ENCODE measurements at regions of chr16 and their contacts with region 1.

Region 1: DNA sequence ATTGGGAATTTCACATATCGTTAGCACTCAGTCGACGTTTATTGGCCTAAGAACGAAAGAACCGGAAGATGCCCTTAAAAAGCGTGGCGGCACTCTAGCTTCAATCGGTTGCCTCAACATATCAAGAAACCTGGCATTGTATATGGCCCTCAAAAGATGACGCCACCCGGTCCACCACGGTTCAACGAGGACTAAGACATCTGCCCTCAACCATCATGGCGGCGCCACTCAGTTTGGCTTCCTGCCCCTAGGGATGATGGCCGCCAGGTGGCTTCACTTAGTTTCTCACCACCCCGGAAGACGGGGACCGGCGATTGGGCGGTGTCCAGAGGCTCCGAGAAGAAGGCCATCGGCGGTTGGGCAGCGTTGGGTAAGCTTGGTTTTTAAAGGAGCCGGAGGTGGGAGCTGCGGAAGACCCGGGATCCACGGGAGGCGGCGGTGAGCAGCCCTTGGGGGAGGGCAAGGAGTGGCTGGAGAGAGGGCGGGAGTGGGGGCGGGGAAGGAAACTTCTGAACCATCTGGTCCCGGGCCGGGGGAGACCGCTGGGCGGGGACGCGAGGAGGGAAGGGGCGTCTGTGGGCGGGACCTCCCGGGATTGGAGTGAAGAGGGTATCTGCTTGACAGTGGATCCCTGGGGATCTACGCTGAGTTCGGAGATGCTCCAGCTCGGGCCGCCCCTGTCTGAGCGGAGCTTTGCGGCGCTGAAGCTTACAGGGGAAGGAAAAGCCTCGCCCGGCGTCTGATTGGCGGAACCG is at the start of gene PRR14:
- DNase-seq: peak; percentile 97
- ATAC-seq: peak; percentile 89
- H3K4me3 ChIP-seq: peak within 1 kb of the TSS; percentile 91
- H3K27ac ChIP-seq: no peak within 1 kb of the TSS
- H3K4me1 ChIP-seq: 0 out of 2 replicates have a peak, but pooled peaks cover 4% of the 10 kb centered on the region
- H3K27me3 ChIP-seq: no peaks in the 10 kb centered on the region
- CTCF ChIP-seq: no peak
- total RNA-seq, gene PRR14: 9.6 and 14.5 TPM in 2 replicates

Region 2: DNA sequence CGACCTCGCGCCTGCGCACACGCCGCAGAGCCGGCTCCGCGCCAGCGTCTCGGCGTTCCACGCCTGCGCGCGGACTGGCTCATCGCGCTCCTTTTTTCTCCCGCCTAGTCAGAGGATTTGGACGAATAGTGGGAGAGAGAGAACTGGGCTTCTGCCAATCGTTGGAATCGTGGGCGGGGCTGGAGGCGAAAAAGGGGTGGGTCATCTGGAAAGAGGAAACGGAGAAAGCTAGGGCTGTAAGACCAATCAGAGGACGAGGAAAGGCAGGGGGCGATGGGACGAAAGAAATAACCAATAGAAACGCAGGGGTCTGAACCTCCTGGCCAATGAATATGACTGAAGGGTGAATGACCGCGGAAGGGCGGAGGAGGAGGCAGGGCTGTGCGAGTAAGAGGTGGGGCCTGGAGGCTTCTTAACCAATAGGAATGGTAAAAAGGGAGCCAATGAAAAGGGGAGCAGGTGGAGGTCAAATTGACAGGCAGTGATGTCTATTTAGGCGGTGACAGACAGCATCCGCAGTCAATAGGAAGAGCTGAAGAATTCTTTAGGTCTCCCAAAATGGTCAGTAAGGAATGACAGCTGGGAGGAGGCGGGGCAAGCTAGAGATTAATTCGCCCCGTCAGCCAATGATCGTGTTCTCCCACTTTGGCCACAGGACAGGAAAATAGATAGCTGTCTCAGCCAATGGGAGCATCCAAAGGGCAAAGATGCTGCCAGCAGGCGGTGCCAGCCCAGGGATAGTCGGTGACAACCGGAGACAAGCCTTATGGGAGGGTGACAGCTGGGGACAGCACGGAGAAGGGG is 279.9 kb before region 1 on chr16 and contains the start of gene TBC1D10B:
- CTCF ChIA-PET with region 1: no interaction called
- POLR2A ChIA-PET with region 1: no interaction called
- intact Hi-C with region 1: loop called (anchors 1 kb)
- DNase-seq: peak; percentile 99
- ATAC-seq: peak; percentile 78
- H3K4me3 ChIP-seq: peak within 1 kb of the TSS; percentile 94
- H3K27ac ChIP-seq: no peak within 1 kb of the TSS; the same call in 1 of the 2 replicates
- H3K4me1 ChIP-seq: peaks cover 21% of the 10 kb centered on the region
- H3K27me3 ChIP-seq: no peaks in the 10 kb centered on the region
- CTCF ChIP-seq: no peak; the same call in 1 of the 2 replicates
- total RNA-seq, gene TBC1D10B: 36.0 and 52.4 TPM in 2 replicates

Region 3: DNA sequence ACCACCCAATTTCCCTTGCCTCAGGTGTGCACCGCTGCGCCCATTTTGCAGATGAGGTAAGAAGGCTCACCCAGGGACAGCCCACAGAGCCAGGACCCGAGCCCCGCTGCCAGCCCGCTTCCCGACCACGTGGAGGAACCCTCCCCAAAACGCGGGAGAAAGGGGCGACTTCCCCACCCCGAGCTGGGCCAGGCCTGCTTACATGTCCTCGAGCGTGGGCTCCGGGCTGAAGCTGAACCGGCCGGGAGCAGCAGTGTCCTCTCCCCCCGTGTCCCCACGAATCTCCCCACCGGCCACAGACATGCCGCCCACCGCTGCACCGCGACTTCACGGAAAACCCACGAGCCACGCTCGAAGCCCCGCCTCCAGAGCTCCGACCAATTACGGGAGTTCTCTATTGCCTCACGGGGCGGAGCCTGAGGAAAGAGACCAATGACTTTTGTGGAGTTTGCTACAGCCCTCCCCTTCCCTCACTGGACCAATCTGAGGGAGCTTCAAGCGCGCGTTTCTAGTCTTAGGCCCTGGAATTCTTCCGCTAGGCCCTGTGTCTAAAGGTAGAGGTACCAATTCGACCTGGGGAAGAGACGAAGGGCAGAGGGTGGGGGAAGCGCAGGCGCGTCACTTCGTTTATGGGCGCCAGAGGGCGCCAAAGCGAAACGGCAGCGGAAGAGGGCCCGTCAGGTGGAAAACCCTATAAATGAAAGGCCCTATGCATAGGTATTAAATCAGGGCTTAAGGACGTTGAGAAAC is 220.7 kb before region 1 on chr16 and contains the start of gene DCTPP1:
- CTCF ChIA-PET with region 1: interaction called, 13 read pairs
- POLR2A ChIA-PET with region 1: no interaction called
- intact Hi-C with region 1: no loop called
- DNase-seq: peak; percentile 98
- ATAC-seq: peak; percentile 98
- H3K4me3 ChIP-seq: peak within 1 kb of the TSS; percentile 87
- H3K27ac ChIP-seq: peak within 1 kb of the TSS; percentile 60
- H3K4me1 ChIP-seq: peaks cover 12% of the 10 kb centered on the region; the same call in 1 of the 2 replicates
- H3K27me3 ChIP-seq: no peaks in the 10 kb centered on the region
- CTCF ChIP-seq: peak; percentile 83
- total RNA-seq, gene DCTPP1: 63.1 and 64.1 TPM in 2 replicates

Region 4: DNA sequence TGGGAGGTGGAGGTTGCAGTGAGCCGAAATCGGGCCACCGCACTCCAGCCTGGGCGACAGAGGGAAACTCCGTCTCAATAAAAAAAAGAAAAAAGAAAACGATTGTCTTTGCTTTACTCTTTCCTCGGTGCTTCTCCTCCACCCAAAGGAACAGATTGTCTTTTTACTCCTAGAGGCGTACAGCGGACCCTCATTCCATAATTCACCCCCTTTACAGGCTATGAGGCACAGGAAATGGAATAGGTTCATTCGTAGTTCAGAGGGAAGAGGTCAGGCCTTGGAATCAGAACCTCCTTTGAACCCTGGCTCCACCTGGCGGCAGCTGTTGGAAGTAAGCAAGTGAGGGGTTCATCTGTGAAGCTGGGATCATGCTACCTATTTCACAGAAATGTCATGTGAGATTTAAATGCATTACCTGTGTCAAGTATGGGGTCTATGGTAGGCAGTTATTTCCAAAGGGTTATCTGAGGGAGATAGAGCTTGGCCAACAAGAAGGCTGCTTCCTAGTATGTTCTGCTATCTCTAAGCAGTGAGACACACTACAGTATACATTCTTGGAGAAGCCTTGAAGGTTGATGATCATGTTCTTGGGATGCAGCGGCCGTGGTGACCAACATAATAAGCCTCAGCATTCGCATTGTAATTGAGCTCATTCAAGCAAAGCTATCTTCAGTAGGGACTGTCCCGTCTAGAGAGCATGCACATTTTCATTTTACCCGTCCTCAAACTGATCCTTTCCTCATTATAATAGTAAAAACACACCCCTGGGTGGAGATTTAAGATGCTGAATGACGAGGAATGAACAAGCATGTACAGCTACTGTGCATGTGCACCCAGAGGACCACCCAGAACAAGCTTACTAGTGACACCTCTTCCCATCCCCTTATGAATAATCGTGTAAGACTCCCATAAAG is 21.7 kb before region 1 on chr16:
- CTCF ChIA-PET with region 1: no interaction called
- POLR2A ChIA-PET with region 1: no interaction called
- intact Hi-C with region 1: loop called (anchors 2 kb)
- DNase-seq: peak; percentile 84
- ATAC-seq: peak; percentile 88
- H3K4me3 ChIP-seq: no peak overlapping the region
- H3K27ac ChIP-seq: no peak overlapping the region
- H3K4me1 ChIP-seq: peaks cover 3% of the 10 kb centered on the region; the same call in 1 of the 2 replicates
- H3K27me3 ChIP-seq: no peaks in the 10 kb centered on the region
- CTCF ChIP-seq: peak; percentile 88

Region 5: DNA sequence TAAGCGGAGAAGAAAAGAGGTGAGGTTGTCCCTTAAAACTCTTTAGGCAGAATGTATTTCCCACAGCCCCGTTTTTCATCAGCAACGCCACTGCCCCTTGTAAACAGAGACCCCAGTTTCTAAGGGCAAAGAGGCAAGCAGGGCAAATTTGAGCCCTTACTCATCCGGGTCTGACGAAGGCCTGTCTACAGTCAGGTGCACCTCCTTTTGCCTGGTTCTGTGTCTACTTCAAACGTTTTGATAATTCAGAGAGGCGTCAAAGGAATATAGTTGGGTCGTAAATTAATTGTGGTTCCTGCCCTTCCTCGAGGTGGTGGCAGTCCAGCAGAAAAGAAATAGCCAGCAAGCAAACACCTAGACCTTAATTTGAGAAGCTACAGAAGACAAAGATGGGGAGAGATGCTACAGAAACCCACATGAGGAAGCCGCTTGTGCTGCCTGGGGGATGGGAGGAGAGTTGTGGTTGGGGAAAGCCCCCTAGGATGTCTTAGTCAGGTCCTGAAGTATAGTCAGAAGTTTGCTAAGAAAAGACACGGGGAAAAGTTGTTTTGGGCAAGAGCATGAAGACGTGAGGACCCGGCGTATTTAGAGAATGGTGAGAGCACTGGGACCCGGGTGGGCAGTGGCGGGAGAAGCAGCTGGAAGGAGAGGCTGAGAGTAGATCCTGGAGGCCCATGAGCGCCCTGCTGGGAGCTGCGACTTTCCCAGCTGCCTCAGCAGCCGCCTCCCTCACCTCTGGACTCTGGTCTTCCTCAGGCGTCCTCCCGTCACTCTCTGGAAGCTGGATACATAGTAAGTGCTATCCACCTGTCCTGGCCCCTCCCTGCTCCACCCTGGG is 10.1 kb after region 1 on chr16:
- CTCF ChIA-PET with region 1: no interaction called
- POLR2A ChIA-PET with region 1: no interaction called
- intact Hi-C with region 1: no loop called
- DNase-seq: no peak
- ATAC-seq: no peak
- H3K4me3 ChIP-seq: peak overlapping the region; percentile 94
- H3K27ac ChIP-seq: no peak overlapping the region
- H3K4me1 ChIP-seq: peaks cover 23% of the 10 kb centered on the region
- H3K27me3 ChIP-seq: no peaks in the 10 kb centered on the region
- CTCF ChIP-seq: no peak

Region 6: GRCh38 chr16:30688675-30689074 is 38.1 kb after region 1 on chr16:
- CTCF ChIA-PET with region 1: interaction called, 4 read pairs
- POLR2A ChIA-PET with region 1: interaction called, 11 read pairs
- intact Hi-C with region 1: no loop called
- DNase-seq: no peak
- ATAC-seq: no peak
- H3K4me3 ChIP-seq: no peak overlapping the region
- H3K27ac ChIP-seq: no peak overlapping the region
- H3K4me1 ChIP-seq: no peaks in the 10 kb centered on the region
- H3K27me3 ChIP-seq: no peaks in the 10 kb centered on the region
- CTCF ChIP-seq: no peak